K562 (cell line): ENCODE measurements at regions of chr9 and their contacts with region 1.

Region 1: DNA sequence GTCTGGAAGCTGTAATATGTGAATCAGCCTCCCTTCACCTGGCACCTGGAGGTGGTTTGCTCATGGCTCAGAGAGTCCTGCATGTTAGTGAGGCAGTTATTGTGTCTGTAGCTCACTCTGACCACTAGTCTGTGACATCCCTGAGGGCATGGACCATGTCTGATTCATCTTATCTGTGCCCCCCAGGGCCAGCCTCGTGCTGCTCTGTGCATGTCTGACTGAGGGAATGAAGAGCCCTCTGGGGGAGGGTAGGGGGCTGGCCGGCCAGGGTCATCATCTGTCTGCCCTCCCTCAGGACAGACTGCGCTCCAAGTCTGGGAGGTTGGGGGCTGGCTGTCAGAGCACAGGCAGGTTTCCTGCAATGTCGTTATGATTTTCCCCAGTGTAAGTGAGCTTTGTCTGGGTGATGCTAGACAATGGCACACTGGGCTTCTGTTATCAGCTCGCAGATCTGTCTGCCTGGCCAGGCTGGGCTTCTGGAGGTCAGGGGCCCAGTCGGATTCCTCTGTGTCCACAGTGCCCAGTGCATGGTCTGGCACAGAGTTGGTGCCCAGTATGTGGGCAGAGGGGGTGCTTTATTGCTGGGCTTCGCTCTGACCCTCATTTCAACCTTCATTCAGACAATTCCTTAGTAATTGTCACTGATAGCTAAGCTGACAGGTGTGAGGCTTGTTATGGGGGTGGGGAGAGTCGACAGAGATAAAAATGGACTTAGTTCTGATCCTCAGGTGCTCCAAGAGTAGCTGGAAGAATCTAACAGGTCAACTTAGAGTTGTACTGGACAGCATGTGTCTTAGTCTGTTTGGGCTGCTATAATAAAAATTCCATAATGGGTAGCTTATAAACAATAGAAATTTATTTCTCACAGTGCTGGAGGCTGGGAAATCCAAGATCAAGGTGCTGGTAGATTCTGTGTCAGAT is 85.7 kb upstream of the SHB start:
- DNase-seq: no peak
- ATAC-seq: peak; percentile 35; the same call in 1 of the 3 replicates
- H3K4me3 ChIP-seq: no peak overlapping the region
- H3K27ac ChIP-seq: no peak overlapping the region
- H3K4me1 ChIP-seq: no peaks in the 10 kb centered on the region
- H3K27me3 ChIP-seq: peaks cover 15 to 31% of the 10 kb centered on the region in 2 experiments
- CTCF ChIP-seq: no peak
- EP300 ChIP-seq: no peak
- POLR2A ChIP-seq: no peak
- RAD21 ChIP-seq: no peak

Region 2: DNA sequence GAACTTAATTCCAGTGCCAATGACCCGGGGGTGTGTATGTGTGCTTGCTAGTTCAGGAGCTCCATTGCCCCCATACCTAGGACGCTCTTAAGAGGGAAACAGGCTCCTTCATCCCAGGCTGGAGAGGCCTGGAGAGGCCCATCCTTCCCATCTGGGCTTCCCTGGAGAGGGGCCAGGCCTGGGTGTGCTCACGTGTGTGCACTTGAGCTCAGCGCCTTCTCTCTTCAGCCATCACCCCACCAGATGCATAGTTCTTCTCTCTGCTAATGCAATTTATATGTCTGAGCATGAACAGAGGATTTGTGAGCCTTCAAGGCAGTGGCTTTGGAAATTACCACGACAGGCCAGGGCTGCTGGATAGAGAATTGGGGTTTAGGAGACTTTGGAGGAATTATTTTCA is 37.1 kb before region 1 on chr9:
- CTCF ChIA-PET with region 1: interaction called, 6 read pairs
- POLR2A ChIA-PET with region 1: no interaction called
- in situ Hi-C with region 1: no loop called
- intact Hi-C with region 1: loop called (anchors 5 kb)
- DNase-seq: no peak
- ATAC-seq: peak; percentile 31; the same call in 2 of the 3 replicates
- H3K4me3 ChIP-seq: no peak overlapping the region
- H3K27ac ChIP-seq: no peak overlapping the region
- H3K4me1 ChIP-seq: 0 out of 5 replicates have a peak, but pooled peaks cover 0 to 4% of the 10 kb centered on the region in 2 experiments
- H3K27me3 ChIP-seq: peaks cover 15 to 43% of the 10 kb centered on the region in 2 experiments; a peak in 4 of 5 replicates
- CTCF ChIP-seq: no peak
- EP300 ChIP-seq: no peak
- POLR2A ChIP-seq: no peak
- RAD21 ChIP-seq: no peak

Region 3: DNA sequence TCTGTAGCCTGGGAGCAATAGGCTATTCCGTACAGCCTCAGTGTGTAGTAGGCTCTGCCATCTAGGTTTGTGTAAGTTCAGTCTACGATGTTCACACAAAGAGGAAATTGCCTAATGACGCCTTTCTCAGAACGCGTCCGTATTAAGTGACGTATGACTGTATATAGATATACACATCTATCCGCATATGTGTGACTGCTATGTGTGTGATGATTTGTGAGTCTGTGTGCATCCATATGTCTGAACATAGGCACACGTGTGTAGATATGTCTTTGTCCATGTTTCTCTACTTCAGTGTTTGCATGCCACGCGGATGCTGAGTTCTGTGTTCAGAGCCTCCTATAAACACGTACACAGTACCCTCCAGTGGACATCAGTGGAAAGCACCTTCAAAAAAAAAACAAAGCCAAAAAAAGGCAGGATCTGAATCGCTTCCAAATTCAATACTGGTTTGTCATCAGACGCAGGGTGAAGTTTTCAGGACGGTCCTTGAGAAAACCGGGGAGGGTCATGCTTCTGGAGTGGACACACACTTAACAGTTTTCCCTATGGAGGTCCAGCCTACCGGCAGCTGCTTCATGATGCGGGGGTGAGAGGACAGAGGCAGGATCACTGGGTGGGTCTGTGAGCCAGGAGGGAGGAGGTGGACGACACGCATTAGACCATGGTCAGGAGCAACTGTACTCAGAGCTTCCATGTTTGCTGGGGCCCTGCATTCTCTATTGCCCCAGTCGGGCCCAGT is 208.3 kb after region 1 on chr9:
- CTCF ChIA-PET with region 1: no interaction called
- POLR2A ChIA-PET with region 1: no interaction called
- in situ Hi-C with region 1: no loop called
- intact Hi-C with region 1: loop called (anchors 10 kb)
- DNase-seq: peak; percentile 25 to 62 (median 46)
- ATAC-seq: peak; percentile 82
- H3K4me3 ChIP-seq: no peak overlapping the region
- H3K27ac ChIP-seq: no peak overlapping the region
- H3K4me1 ChIP-seq: peaks cover 0 to 4% of the 10 kb centered on the region in 2 experiments; a peak in 2 of 5 replicates
- H3K27me3 ChIP-seq: peaks cover 16 to 27% of the 10 kb centered on the region in 2 experiments
- CTCF ChIP-seq: peak; percentile 69 to 91 (median 86)
- EP300 ChIP-seq: no peak
- POLR2A ChIP-seq: no peak
- RAD21 ChIP-seq: peak; percentile 83 to 88